ENCODE measurements at regions of chr3 and their contacts with region 1.

Region 1: DNA sequence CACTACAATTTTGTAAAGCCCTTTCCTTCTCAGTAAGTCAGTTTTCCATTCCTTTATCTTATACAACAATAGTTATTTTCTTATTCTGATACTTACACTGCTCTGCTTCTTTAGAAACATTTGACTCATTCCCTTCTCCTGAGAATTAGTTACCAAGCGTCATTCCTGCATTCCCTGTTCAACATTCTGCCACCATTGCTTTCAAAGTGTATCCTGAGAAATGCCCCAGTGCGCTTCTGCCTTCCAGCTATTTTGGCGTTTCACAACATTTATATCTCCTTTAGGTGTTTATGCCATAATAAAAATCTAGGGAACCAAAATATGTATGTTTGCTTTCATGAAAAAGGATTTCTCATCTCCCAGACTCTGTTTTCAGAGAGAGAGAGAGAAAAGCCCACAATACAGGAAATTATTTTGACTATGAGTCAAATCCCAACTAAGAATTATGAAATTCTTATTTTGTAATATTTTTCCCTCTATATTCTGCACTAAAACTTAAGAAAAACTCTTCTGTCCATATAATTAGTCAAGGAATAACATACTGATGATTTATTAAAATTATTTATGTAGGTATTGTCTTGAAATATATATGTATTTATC is 118.2 kb upstream of the RAP2B start:
- DNase-seq: no peak
- ATAC-seq: no peak
- H3K4me3 ChIP-seq: no peak overlapping the region
- H3K4me3 Mint-ChIP-seq: no peak overlapping the region
- H3K27ac ChIP-seq: no peak overlapping the region
- H3K27ac Mint-ChIP-seq: no peak overlapping the region
- H3K4me1 ChIP-seq: no peaks in the 10 kb centered on the region
- H3K4me1 Mint-ChIP-seq: no peaks in the 10 kb centered on the region
- H3K27me3 ChIP-seq: no peaks in the 10 kb centered on the region
- H3K27me3 Mint-ChIP-seq: peaks cover 6% of the 10 kb centered on the region
- CTCF ChIP-seq: no peak

Region 2: DNA sequence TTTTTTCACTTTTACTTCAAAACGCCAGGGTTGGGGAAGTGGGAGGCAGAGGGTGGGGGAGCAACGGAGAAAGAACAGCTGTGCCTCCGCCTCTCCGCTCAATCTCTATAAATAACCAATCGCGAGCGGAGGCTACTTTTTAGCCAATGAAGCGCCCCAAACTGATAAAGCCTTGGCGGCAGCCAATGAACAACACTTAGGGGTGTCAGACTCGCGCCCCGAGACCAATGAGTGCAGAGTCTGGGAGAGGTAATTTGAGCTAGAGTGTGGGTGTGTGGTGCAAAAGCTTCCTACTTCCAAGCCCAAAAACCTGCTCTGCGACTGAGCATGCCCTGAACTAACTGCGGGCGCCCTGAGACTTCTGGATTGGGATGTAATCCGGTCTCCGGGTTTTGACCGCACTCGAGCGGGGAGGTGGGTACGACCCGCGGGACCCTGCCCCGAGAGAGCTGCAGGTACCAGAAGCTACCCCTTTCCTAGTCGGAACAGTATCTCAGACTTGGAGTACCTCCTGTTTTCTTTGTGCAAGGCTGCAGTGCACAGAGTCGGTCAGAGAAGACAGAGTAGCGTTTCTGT is 117.4 kb after region 1 on chr3:
- CTCF ChIA-PET with region 1: interaction called, 7 read pairs
- POLR2A ChIA-PET with region 1: no interaction called
- intact Hi-C with region 1: loop called (anchors 5 kb)
- DNase-seq: peak; percentile 95
- ATAC-seq: peak; percentile 75
- H3K4me3 ChIP-seq: peak overlapping the region; percentile 61 to 99 (median 93)
- H3K4me3 Mint-ChIP-seq: peak overlapping the region; percentile 99
- H3K27ac ChIP-seq: peak overlapping the region; percentile 79 to 83
- H3K27ac Mint-ChIP-seq: peak overlapping the region; percentile 98
- H3K4me1 ChIP-seq: peaks cover 26 to 38% of the 10 kb centered on the region in 2 donors
- H3K4me1 Mint-ChIP-seq: peaks cover 47% of the 10 kb centered on the region
- H3K27me3 ChIP-seq: no peaks in the 10 kb centered on the region
- H3K27me3 Mint-ChIP-seq: no peaks in the 10 kb centered on the region
- CTCF ChIP-seq: no peak

Region 3: GRCh38 chr3:153385343-153385742 is 341.5 kb after region 1 on chr3:
- CTCF ChIA-PET with region 1: no interaction called
- POLR2A ChIA-PET with region 1: no interaction called
- intact Hi-C with region 1: loop called (anchors 10 kb)
- DNase-seq: no peak
- ATAC-seq: no peak
- H3K4me3 ChIP-seq: no peak overlapping the region
- H3K4me3 Mint-ChIP-seq: no peak overlapping the region
- H3K27ac ChIP-seq: no peak overlapping the region
- H3K27ac Mint-ChIP-seq: no peak overlapping the region
- H3K4me1 ChIP-seq: no peaks in the 10 kb centered on the region
- H3K4me1 Mint-ChIP-seq: no peaks in the 10 kb centered on the region
- H3K27me3 ChIP-seq: no peaks in the 10 kb centered on the region
- H3K27me3 Mint-ChIP-seq: no peaks in the 10 kb centered on the region
- CTCF ChIP-seq: no peak

Region 4: GRCh38 chr3:153595186-153595815 is 551.5 kb after region 1 on chr3:
- CTCF ChIA-PET with region 1: interaction called, 5 read pairs
- POLR2A ChIA-PET with region 1: no interaction called
- intact Hi-C with region 1: loop called (anchors 1 kb)
- DNase-seq: peak; percentile 12
- ATAC-seq: no peak
- H3K4me3 ChIP-seq: no peak overlapping the region
- H3K4me3 Mint-ChIP-seq: no peak overlapping the region
- H3K27ac ChIP-seq: no peak overlapping the region
- H3K27ac Mint-ChIP-seq: no peak overlapping the region
- H3K4me1 ChIP-seq: no peaks in the 10 kb centered on the region
- H3K4me1 Mint-ChIP-seq: no peaks in the 10 kb centered on the region
- H3K27me3 ChIP-seq: no peaks in the 10 kb centered on the region
- H3K27me3 Mint-ChIP-seq: peaks cover 3% of the 10 kb centered on the region
- CTCF ChIP-seq: peak; percentile 21

Region 5: DNA sequence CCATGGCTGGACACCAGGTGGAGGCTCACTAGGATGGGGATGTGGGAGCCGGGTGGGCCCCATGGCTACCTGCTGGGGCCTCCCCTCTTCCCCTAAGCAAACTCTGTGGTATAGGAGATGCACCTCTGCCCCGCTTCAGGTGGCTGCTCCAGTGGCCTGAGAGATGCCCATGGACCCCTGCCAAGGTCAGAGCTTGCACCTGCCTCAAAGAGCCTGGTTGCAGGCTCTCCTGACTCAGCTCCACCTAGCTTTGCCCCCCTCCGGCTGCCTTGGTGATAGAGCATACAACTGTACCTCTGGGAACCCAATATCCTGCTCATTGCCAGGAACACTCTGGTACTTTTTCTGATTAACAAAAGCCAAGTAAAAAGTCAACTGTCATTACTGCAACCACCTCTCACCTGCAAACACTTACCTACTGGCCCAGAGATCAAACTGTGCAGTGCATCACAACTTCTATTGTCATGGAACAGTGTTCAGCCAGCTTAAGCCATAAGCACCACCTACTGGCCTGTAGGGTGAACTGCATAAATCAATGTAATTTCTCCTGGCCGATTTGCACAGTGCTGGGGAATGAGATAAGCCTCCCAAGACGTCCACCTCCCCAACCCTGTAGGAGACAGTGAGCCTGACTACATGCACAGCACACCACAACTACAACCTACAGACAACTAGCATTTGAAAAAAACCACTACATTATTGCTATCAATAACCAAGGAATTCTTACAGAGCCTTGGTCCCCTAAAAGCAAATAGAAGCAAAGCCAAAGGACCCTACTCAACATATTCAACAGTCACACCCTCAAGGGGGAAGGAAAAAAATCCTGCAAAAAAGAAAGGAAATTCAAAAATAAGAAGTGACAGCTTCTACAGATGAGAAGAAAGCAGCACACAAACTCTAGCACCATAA is 725.0 kb after region 1 on chr3:
- CTCF ChIA-PET with region 1: interaction called, 47 read pairs
- POLR2A ChIA-PET with region 1: no interaction called
- intact Hi-C with region 1: no loop called
- DNase-seq: peak; percentile 61
- ATAC-seq: peak; percentile 77
- H3K4me3 ChIP-seq: no peak overlapping the region
- H3K4me3 Mint-ChIP-seq: no peak overlapping the region
- H3K27ac ChIP-seq: no peak overlapping the region
- H3K27ac Mint-ChIP-seq: no peak overlapping the region
- H3K4me1 ChIP-seq: no peaks in the 10 kb centered on the region
- H3K4me1 Mint-ChIP-seq: no peaks in the 10 kb centered on the region
- H3K27me3 ChIP-seq: no peaks in the 10 kb centered on the region
- H3K27me3 Mint-ChIP-seq: peaks cover 3% of the 10 kb centered on the region
- CTCF ChIP-seq: peak; percentile 86

Region 6: DNA sequence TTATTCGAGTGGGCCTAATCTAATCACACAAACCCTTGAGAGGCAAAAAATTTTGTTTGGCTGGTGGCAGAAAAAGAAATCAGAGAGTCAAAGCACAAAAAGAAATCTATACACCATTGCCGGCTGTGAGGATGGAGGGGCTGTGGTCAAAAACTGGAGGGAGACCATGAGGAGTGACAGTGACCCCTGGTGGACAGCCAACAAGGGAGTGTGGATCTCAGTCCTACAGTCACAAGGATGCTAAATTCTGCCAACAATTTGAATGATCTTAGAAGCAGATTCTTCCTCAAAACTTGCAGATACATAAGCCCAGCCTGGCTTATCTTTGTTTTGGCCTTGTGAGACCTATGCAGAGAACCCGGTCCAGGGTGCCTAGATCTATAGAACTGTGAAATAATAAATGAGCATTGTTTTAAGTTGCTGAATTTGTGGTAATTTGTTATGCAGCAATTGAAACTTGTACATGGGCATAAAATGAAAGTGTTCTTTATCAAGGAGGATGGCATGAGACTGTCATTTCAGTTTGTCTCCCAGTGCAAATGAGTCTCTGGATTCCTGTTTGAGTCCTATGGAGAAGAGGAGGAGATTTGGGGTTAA is 974.4 kb after region 1 on chr3:
- CTCF ChIA-PET with region 1: interaction called, 5 read pairs
- POLR2A ChIA-PET with region 1: no interaction called
- intact Hi-C with region 1: loop called (anchors 5 kb)
- DNase-seq: peak; percentile 10
- ATAC-seq: no peak
- H3K4me3 ChIP-seq: no peak overlapping the region
- H3K4me3 Mint-ChIP-seq: no peak overlapping the region
- H3K27ac ChIP-seq: no peak overlapping the region
- H3K27ac Mint-ChIP-seq: no peak overlapping the region
- H3K4me1 ChIP-seq: no peaks in the 10 kb centered on the region
- H3K4me1 Mint-ChIP-seq: no peaks in the 10 kb centered on the region
- H3K27me3 ChIP-seq: no peaks in the 10 kb centered on the region
- H3K27me3 Mint-ChIP-seq: no peaks in the 10 kb centered on the region
- CTCF ChIP-seq: peak; percentile 65

Region 7: GRCh38 chr3:154148541-154148940 is 1104.7 kb after region 1 on chr3:
- CTCF ChIA-PET with region 1: no interaction called
- POLR2A ChIA-PET with region 1: no interaction called
- intact Hi-C with region 1: no loop called
- DNase-seq: no peak
- ATAC-seq: no peak
- H3K4me3 ChIP-seq: no peak overlapping the region
- H3K4me3 Mint-ChIP-seq: no peak overlapping the region
- H3K27ac ChIP-seq: no peak overlapping the region
- H3K27ac Mint-ChIP-seq: no peak overlapping the region
- H3K4me1 ChIP-seq: no peaks in the 10 kb centered on the region
- H3K4me1 Mint-ChIP-seq: no peaks in the 10 kb centered on the region
- H3K27me3 ChIP-seq: no peaks in the 10 kb centered on the region
- H3K27me3 Mint-ChIP-seq: peaks cover 19% of the 10 kb centered on the region
- CTCF ChIP-seq: no peak